Prostate gland (tissue), 2 donors: ENCODE measurements at regions of chr3 and their contacts with region 1.

Region 1: DNA sequence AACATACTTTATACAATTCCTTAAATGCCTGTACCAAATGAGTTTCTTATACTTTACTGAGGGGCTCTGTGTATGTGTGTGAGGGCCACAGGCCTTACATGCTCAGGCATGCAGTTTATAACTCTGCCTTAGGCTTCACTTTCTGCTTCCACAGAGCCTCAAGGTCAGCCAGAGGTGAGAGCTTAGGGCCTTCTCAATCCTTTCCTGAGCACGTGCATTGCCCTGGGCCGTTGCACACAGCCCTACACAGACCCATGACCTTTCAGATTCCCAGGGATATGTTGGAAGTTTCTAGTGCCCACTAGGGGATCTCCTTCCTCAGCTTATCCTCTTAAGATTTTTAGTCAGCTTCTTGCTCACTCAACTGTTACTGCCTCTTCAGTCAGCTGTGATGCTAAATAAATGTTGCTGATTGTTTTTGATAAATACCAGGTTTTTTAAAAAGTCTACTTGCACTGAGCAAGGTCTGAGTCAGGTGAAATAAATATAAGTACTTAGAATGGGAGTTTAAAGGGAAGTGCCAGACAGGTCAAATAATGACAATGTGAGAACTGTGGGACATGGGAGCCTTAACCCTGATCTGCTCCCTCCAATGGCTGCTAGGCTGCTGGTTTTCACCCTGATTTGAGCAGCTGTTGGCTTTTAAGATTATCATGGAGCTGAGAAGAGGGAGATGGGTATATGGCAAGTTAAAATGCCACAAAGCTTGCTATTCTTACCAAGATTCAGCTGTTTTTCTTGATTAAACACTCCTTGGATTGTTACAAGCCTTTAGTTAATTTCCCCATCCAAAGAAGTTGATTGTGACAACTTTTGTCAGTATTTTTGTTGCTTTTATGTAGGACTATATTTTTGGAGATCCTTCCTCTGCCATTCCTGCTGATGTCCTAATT is 169.5 kb downstream of the PLD1 start:
- DNase-seq: no peak
- H3K4me3 ChIP-seq: no peak overlapping the region
- H3K27ac ChIP-seq: no peak overlapping the region
- H3K4me1 ChIP-seq: no peaks in the 10 kb centered on the region
- H3K27me3 ChIP-seq: no peaks in the 10 kb centered on the region
- CTCF ChIP-seq: no peak
- POLR2A ChIP-seq: no peak

Region 2: DNA sequence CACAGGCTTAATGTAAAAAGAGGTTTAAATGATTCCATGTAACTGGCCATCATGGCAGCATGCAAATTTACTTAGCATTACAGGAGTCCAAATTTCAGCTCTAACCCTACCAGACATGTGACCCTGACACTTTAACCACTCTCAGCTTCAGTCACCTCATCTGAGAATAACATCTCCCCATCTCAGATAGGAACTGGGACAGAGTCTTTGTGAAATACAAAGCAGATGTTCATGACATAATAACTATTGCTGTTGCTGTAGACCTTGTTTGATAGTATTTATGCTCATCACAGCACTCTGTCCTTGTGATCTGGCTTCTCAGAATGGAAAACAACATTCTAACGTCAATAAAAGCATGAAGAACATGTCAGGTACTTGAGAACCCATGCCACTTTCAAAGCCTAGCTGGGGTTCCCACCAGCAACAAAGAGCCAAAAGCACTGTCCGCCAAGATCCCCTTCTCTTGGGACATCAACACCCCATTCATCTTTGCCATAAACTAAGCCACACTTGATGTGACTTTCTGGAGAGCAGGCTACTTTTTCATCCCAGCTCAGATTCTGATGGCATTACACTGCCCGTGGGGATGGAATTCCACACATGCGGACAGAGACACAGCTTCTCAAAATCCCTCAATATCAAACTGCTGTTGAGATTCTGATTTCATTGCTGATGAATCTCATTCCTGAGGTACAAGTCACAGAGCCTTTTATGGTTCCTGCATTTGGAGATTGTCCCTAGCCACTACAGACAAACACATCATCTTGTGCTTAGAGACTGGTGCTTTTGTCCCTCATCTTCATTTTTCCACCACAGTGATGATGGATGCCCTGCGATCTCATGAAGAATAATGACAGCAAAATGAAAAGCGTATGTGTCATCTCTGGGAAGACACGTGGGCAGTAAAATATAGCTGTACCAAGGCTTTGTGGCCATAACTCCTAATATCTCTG is 383.2 kb before region 1 on chr3:
- intact Hi-C with region 1: no loop called
- DNase-seq: no peak
- H3K4me3 ChIP-seq: no peak overlapping the region
- H3K27ac ChIP-seq: no peak overlapping the region
- H3K4me1 ChIP-seq: no peaks in the 10 kb centered on the region
- H3K27me3 ChIP-seq: no peaks in the 10 kb centered on the region
- CTCF ChIP-seq: no peak
- POLR2A ChIP-seq: no peak

Region 3: DNA sequence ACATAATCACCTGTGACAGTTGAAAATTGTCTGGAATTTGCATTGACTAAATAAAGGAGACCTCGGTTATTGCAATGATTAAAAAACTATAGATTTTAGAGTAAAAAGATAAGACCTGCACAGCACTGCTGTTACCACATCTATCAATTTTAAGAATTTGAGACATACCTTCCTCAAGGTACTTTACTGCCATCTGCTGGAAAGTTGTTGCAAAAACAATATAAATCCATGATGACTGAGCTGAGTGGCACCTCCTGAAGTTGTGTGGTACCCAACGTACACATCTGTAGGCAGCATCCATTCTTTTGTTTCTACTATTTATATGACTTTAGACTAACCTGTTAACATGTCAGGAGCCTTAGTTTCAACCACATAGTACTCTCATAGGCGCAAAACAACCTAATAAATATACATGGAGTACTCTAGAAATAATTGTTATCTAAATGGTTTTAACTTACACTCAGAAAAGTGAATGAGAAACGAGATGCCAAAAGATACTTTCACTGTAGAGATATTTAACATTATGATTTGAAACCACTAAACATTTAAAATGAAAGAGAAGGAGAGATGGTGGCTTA is 700.8 kb after region 1 on chr3:
- intact Hi-C with region 1: loop called (anchors 5 kb)
- DNase-seq: peak; percentile 36
- H3K4me3 ChIP-seq: no peak overlapping the region
- H3K27ac ChIP-seq: no peak overlapping the region
- H3K4me1 ChIP-seq: no peaks in the 10 kb centered on the region
- H3K27me3 ChIP-seq: no peaks in the 10 kb centered on the region
- CTCF ChIP-seq: peak; percentile 33 to 74 (median 68)
- POLR2A ChIP-seq: no peak